ENCODE measurements at regions of chr5 and their contacts with region 1.

Region 1: GRCh38 chr5:2276101-2276500 is 393.4 kb upstream of the IRX4 start:
- DNase-seq: no peak
- ATAC-seq: no peak
- H3K4me3 ChIP-seq: no peak overlapping the region
- H3K4me3 Mint-ChIP-seq: no peak overlapping the region
- H3K27ac ChIP-seq: no peak overlapping the region
- H3K27ac Mint-ChIP-seq: no peak overlapping the region
- H3K4me1 ChIP-seq: no peaks in the 10 kb centered on the region
- H3K4me1 Mint-ChIP-seq: no peaks in the 10 kb centered on the region
- H3K27me3 ChIP-seq: no peaks in the 10 kb centered on the region
- H3K27me3 Mint-ChIP-seq: peaks cover 5% of the 10 kb centered on the region
- CTCF ChIP-seq: no peak

Region 2: DNA sequence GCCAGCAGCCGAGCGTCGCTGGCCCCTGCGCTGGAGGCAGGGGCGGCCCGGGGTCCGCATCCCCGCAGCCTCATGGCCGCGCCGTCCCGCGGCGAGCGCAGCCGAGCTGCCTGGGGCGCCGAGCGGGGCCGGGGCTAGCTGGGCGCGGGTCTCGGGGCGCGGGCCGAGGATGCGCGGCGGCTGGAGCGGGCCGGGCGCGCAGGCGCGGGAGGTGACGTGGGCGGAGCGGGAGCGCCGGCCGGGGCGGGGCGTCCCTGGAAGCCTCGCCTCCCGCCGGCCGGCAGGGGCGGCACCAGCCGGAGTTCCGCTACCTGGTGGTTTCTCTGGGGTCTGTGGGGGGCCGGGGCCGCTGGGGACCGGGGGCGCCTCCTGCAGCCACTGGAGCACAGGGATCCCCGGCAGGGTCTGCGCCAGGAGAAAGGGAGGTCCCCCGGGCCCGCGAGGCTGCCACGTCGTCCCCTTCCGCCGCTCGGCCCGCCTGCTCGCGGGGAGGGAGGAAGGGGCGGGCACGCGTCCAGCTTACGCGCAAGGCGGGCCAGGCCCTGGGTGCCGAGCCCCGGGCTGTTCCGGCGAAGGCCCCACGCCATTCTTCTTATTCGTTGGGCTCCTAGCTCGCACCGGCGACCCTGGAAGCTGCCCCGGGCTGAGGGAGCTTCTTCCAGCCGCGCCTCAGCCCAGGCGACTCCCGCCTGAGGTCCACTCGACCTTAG is 752.2 kb before region 1 on chr5 and contains the start of gene LPCAT1:
- CTCF ChIA-PET with region 1: no interaction called
- POLR2A ChIA-PET with region 1: no interaction called
- intact Hi-C with region 1: no loop called
- DNase-seq: peak; percentile 49 to 88 (median 73)
- ATAC-seq: peak; percentile 84
- H3K4me3 ChIP-seq: peak within 1 kb of the TSS; percentile 57 to 66
- H3K4me3 Mint-ChIP-seq: peak within 1 kb of the TSS; percentile 81
- H3K27ac ChIP-seq: peak within 1 kb of the TSS; percentile 52 to 78
- H3K27ac Mint-ChIP-seq: peak within 1 kb of the TSS; percentile 82
- H3K4me1 ChIP-seq: peaks cover 33% of the 10 kb centered on the region
- H3K4me1 Mint-ChIP-seq: peaks cover 24% of the 10 kb centered on the region
- H3K27me3 ChIP-seq: no peaks in the 10 kb centered on the region
- H3K27me3 Mint-ChIP-seq: no peaks in the 10 kb centered on the region
- CTCF ChIP-seq: no peak
- total RNA-seq, gene LPCAT1: 28.8 to 29.1 TPM

Region 3: DNA sequence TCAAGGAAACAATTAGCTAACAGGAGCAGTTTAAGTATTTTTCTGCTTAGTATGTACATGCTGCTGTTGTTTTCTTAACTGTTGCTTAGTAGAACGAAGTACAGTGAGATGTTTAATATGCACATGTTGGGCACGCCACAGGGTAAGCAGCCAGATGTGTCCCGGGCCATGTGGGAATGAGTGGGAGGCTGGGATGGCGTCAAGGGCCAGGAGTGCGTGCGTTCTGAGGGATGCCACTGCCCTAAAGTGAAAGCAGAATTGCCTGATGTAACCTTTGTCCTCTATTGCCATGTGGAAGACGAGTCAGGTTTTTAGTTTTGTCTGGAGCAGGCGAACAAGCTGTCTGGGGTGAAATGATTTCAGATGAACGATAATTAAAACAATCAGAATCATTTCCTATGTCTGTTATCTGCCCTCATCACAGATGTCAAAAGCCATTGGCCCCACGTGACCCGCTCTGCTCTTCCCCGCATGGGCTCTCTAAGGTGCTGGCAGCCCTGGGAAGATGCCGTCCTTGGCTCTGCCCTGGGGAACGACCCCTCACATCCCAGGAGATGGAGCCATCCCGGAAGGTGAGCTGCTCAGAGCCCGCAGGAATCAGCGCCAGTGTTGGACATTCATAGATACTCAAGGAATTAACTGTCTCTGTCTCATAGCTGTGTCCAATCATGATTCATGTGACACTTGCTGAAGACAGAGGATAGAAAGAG is 36.7 kb before region 1 on chr5:
- CTCF ChIA-PET with region 1: no interaction called
- POLR2A ChIA-PET with region 1: no interaction called
- intact Hi-C with region 1: loop called in 1 of 2 experiments (anchors 2 kb)
- DNase-seq: no peak
- ATAC-seq: no peak
- H3K4me3 ChIP-seq: no peak overlapping the region
- H3K4me3 Mint-ChIP-seq: no peak overlapping the region
- H3K27ac ChIP-seq: no peak overlapping the region
- H3K27ac Mint-ChIP-seq: no peak overlapping the region
- H3K4me1 ChIP-seq: no peaks in the 10 kb centered on the region
- H3K4me1 Mint-ChIP-seq: no peaks in the 10 kb centered on the region
- H3K27me3 ChIP-seq: no peaks in the 10 kb centered on the region
- H3K27me3 Mint-ChIP-seq: peaks cover 2% of the 10 kb centered on the region
- CTCF ChIP-seq: no peak

Region 4: DNA sequence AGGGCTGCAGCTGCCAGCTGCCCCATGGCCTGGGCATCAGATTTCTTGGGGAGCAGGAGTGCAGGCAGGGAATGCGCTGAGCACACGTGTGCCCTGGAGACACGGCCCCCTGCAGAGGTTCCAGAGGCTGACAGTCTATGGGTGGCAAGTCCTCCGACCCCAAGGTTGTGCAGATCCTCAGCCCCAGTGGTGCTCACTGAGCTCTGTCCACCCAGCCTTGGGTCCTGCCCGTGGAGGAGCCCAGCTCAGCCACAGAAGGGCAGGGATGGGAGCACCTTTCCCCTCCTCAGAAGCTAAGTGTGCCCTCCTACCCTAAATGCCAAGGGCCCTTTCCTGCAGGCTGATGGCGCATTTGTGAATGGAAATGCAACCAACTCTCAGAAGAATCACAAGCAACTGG is 134.3 kb after region 1 on chr5:
- CTCF ChIA-PET with region 1: no interaction called
- POLR2A ChIA-PET with region 1: no interaction called
- intact Hi-C with region 1: no loop called
- DNase-seq: no peak
- ATAC-seq: no peak
- H3K4me3 ChIP-seq: no peak overlapping the region
- H3K4me3 Mint-ChIP-seq: no peak overlapping the region
- H3K27ac ChIP-seq: no peak overlapping the region
- H3K27ac Mint-ChIP-seq: no peak overlapping the region
- H3K4me1 ChIP-seq: no peaks in the 10 kb centered on the region
- H3K4me1 Mint-ChIP-seq: no peaks in the 10 kb centered on the region
- H3K27me3 ChIP-seq: no peaks in the 10 kb centered on the region
- H3K27me3 Mint-ChIP-seq: peaks cover 6% of the 10 kb centered on the region
- CTCF ChIP-seq: no peak

Region 5: GRCh38 chr5:2453781-2454180 is 177.7 kb after region 1 on chr5:
- CTCF ChIA-PET with region 1: no interaction called
- POLR2A ChIA-PET with region 1: no interaction called
- intact Hi-C with region 1: no loop called
- DNase-seq: no peak
- ATAC-seq: no peak
- H3K4me3 ChIP-seq: no peak overlapping the region
- H3K4me3 Mint-ChIP-seq: no peak overlapping the region
- H3K27ac ChIP-seq: no peak overlapping the region
- H3K27ac Mint-ChIP-seq: no peak overlapping the region
- H3K4me1 ChIP-seq: no peaks in the 10 kb centered on the region
- H3K4me1 Mint-ChIP-seq: no peaks in the 10 kb centered on the region
- H3K27me3 ChIP-seq: peaks cover 0 to 3% of the 10 kb centered on the region in 2 experiments
- H3K27me3 Mint-ChIP-seq: peaks cover 2% of the 10 kb centered on the region
- CTCF ChIP-seq: no peak

Region 6: GRCh38 chr5:3778000-3778550 is 1502.0 kb after region 1 on chr5:
- CTCF ChIA-PET with region 1: no interaction called
- POLR2A ChIA-PET with region 1: no interaction called
- intact Hi-C with region 1: no loop called
- DNase-seq: no peak
- ATAC-seq: no peak
- H3K4me3 ChIP-seq: no peak overlapping the region
- H3K4me3 Mint-ChIP-seq: no peak overlapping the region
- H3K27ac ChIP-seq: no peak overlapping the region
- H3K27ac Mint-ChIP-seq: no peak overlapping the region
- H3K4me1 ChIP-seq: no peaks in the 10 kb centered on the region
- H3K4me1 Mint-ChIP-seq: no peaks in the 10 kb centered on the region
- H3K27me3 ChIP-seq: no peaks in the 10 kb centered on the region
- H3K27me3 Mint-ChIP-seq: no peaks in the 10 kb centered on the region
- CTCF ChIP-seq: no peak

Measured in CD8-positive, alpha-beta T cell (primary cell).